Naive thymus-derived CD4-positive, alpha-beta T cell (primary cell): ENCODE measurements at regions of chr10 and their contacts with region 1.

Region 1: GRCh38 chr10:119542988-119543813 is 682 bp upstream of the RGS10 start:
- DNase-seq: peak; percentile 54 to 74 (median 68)
- ATAC-seq: peak; percentile 68
- H3K4me3 ChIP-seq: peak overlapping the region; percentile 96
- H3K4me3 Mint-ChIP-seq: peak overlapping the region; percentile 83 to 97 (median 94)
- H3K27ac ChIP-seq: peak overlapping the region; percentile 89
- H3K27ac Mint-ChIP-seq: peak overlapping the region; percentile 86 to 95 (median 91)
- H3K4me1 ChIP-seq: peaks cover 15 to 19% of the 10 kb centered on the region in 2 donors
- H3K4me1 Mint-ChIP-seq: peaks cover 19 to 41% (median 28%) of the 10 kb centered on the region in 7 donors
- H3K27me3 ChIP-seq: no peaks in the 10 kb centered on the region
- H3K27me3 Mint-ChIP-seq: peaks cover 0 to 17% (median 3%) of the 10 kb centered on the region in 5 donors

Region 2: DNA sequence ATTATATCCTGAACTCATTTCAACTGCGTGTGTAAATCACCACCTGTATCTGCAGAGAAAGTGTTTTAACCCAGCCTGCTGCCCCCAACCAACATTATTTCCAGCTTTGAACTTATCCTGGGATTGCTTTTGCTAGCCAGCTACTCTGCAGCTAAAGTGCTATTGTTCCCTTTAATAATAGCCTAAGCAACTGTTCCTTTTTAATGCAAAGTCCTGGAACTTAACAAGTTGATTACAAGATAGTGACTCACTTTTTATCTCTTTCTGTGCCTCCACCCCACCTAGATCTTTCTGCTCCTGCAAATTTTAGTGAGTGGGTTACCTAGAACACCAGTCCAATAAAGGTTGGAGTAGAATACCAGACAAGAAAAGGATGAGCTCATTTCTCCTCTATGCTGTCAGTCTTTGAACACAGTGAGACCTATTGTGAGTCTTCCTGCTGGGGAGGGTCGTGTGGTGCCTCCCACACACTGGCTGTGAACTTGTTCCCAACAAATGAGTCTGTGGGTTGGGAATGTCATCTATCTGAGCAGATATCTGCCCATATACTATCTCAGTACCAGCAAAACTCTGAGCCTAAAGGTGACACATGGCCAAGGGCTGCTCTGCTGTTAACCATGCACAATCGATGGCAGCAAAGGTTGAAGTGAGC is 1338.8 kb before region 1 on chr10:
- CTCF ChIA-PET with region 1: no interaction called
- POLR2A ChIA-PET with region 1: no interaction called
- intact Hi-C with region 1: no loop called
- DNase-seq: no peak
- ATAC-seq: no peak
- H3K4me3 ChIP-seq: no peak overlapping the region
- H3K4me3 Mint-ChIP-seq: no peak overlapping the region
- H3K27ac ChIP-seq: no peak overlapping the region
- H3K27ac Mint-ChIP-seq: no peak overlapping the region
- H3K4me1 ChIP-seq: no peaks in the 10 kb centered on the region
- H3K4me1 Mint-ChIP-seq: no peaks in the 10 kb centered on the region
- H3K27me3 ChIP-seq: no peaks in the 10 kb centered on the region
- H3K27me3 Mint-ChIP-seq: peaks cover 9 to 51% (median 44%) of the 10 kb centered on the region in 5 donors

Region 3: DNA sequence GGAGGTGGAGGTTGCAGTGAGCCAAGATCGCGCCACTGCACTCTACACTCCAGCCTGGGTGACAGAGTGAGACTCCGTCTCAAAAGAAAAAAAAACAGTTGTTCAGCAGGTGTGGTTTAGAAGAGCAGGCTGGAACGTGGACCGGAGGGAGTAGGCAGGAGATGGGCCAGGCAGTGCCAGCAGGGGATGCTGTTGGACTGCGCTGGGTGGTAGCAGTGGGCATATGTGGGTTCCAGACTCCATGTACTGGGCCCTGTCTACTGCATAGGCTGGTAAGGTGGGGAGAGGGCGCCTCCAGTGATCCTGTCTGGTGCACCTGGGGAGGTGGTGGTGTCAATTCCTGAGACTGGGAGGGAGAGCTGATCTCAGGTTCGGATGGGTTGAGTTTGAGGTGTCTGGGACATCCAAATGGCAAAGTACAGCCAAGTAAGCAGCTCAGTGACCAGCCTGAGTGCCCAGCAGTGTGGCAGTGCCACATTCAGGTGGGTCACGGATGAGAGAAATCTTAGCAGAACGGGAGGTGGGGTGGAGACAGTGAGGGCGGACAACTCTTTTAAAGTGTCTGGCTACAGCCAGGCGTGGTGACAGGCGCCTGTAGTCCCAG is 403.6 kb before region 1 on chr10:
- CTCF ChIA-PET with region 1: no interaction called
- POLR2A ChIA-PET with region 1: no interaction called
- intact Hi-C with region 1: loop called (anchors 1 to 5 kb)
- DNase-seq: peak; percentile 18 to 58 (median 42)
- ATAC-seq: peak; percentile 85
- H3K4me3 ChIP-seq: no peak overlapping the region
- H3K4me3 Mint-ChIP-seq: no peak overlapping the region
- H3K27ac ChIP-seq: no peak overlapping the region
- H3K27ac Mint-ChIP-seq: peak overlapping the region; percentile 49 to 92 (median 62)
- H3K4me1 ChIP-seq: no peaks in the 10 kb centered on the region
- H3K4me1 Mint-ChIP-seq: peaks cover 5 to 26% (median 11%) of the 10 kb centered on the region in 7 donors
- H3K27me3 ChIP-seq: no peaks in the 10 kb centered on the region
- H3K27me3 Mint-ChIP-seq: no peaks in the 10 kb centered on the region

Region 4: GRCh38 chr10:119207367-119207668 is 335.9 kb before region 1 on chr10 and contains the start of gene GRK5:
- CTCF ChIA-PET with region 1: interaction called, 12 read pairs
- POLR2A ChIA-PET with region 1: interaction called, 25 read pairs
- intact Hi-C with region 1: loop called (anchors 1 kb)
- DNase-seq: peak; percentile 96 to 99 (median 98)
- ATAC-seq: peak; percentile 91
- H3K4me3 ChIP-seq: peak within 1 kb of the TSS; percentile 75
- H3K4me3 Mint-ChIP-seq: peak within 1 kb of the TSS; percentile 94 to 98 (median 97)
- H3K27ac ChIP-seq: peak within 1 kb of the TSS; percentile 89
- H3K27ac Mint-ChIP-seq: peak within 1 kb of the TSS; percentile 91 to 99 (median 96)
- H3K4me1 ChIP-seq: peaks cover 23 to 35% of the 10 kb centered on the region in 2 donors
- H3K4me1 Mint-ChIP-seq: peaks cover 41 to 48% (median 44%) of the 10 kb centered on the region in 7 donors
- H3K27me3 ChIP-seq: no peaks in the 10 kb centered on the region
- H3K27me3 Mint-ChIP-seq: no peaks in the 10 kb centered on the region
- total RNA-seq, gene GRK5: 20.3 to 45.2 (median 34.2) TPM

Region 5: DNA sequence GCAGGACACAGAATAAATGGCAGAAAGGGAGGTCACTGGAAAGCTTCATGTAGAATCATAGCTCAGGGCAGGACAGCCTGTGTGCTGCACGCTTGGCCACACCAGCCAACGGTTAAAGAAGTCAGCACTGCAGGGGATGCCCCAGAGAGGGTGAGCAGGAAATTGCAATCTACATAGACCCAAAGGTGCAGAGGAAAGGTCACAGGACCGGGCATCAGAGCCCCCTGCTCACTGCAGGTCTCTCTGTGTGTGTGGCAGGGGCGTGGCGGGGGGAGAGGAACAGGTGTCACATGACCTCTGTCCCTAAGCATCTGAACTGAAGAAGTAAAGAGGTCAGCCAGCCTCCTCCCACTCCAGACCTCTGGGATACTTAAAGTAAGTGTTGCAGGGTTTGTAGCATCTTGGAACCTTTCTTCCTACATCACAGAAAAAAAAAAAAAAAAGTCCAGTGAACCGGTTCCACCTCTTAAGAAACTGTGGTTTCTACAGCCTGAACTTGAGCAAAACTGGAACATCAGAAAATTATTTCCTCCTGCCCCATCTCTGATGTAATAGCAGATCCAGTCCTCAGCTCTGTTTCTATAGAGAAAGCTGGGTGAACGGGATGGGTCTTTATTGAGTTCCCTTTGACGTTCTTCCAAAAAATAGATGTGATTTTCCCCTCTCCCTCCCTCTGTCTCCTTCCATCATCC is 64.9 kb before region 1 on chr10:
- CTCF ChIA-PET with region 1: interaction called, 10 read pairs
- POLR2A ChIA-PET with region 1: interaction called, 7 read pairs
- intact Hi-C with region 1: loop called in 1 of 2 experiments (anchors 2 kb)
- DNase-seq: peak in 2 of 9 donors; percentile 5 to 35
- ATAC-seq: peak; percentile 64
- H3K4me3 ChIP-seq: no peak overlapping the region
- H3K4me3 Mint-ChIP-seq: peak overlapping the region; percentile 66 to 81 (median 71)
- H3K27ac ChIP-seq: no peak overlapping the region
- H3K27ac Mint-ChIP-seq: peak overlapping the region; percentile 23 to 81 (median 71)
- H3K4me1 ChIP-seq: peaks cover 20 to 26% of the 10 kb centered on the region in 2 donors
- H3K4me1 Mint-ChIP-seq: peaks cover 25 to 44% (median 35%) of the 10 kb centered on the region in 7 donors
- H3K27me3 ChIP-seq: no peaks in the 10 kb centered on the region
- H3K27me3 Mint-ChIP-seq: peaks cover 0 to 6% (median 0%) of the 10 kb centered on the region in 5 donors

Region 6: DNA sequence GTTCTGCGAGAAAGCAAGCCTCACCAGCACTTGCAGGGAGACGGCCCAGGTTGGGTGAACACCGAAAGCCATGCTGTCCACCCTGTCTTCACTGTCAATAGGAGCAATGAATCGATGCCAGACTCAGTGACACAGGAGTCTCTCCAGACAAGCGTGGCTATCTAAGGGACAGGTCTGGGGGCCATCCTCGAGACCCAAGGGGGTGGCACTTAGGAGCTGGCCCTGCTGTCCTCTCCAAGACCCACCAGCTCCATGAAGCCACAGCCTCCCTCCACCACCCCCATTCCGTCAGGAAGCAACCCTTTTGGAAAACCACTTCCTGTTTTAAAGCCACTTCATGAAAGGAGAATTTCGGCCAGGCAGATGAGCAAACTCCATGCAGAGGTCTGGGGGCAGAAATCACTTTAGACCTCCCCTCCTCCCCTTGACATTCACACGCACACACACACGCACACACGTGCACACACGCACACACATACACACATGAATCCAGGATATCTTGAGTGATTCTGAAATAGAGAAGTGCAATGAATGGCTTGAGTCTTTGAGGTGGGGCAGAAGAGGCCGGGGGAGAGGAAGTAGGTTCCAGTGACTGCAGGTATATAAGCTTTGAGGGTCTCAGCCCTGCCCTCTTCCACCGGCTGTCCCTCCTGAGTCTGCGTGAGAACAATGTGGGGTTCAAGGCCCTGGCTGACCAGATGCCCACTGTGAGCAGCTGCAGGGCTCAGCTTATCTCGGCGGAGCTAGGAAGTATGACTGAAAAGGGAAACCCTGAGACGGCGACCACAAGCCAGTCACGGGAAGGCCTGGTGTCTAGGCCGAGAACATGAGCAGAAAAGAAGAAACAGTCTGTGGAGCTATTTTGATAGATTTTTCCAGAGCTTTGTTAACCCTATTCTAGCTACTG is 25.7 kb before region 1 on chr10:
- CTCF ChIA-PET with region 1: interaction called, 13 read pairs
- POLR2A ChIA-PET with region 1: interaction called, 160 read pairs
- intact Hi-C with region 1: loop called (anchors 1 kb)
- DNase-seq: peak in 6 of 9 donors; percentile 28 to 59 (median 44)
- ATAC-seq: peak; percentile 60
- H3K4me3 ChIP-seq: peak overlapping the region; percentile 42
- H3K4me3 Mint-ChIP-seq: peak overlapping the region; percentile 65 to 88 (median 78)
- H3K27ac ChIP-seq: peak overlapping the region; percentile 81
- H3K27ac Mint-ChIP-seq: peak overlapping the region; percentile 89 to 98 (median 95)
- H3K4me1 ChIP-seq: peaks cover 33 to 68% of the 10 kb centered on the region in 2 donors
- H3K4me1 Mint-ChIP-seq: peaks cover 45 to 86% (median 76%) of the 10 kb centered on the region in 7 donors
- H3K27me3 ChIP-seq: no peaks in the 10 kb centered on the region
- H3K27me3 Mint-ChIP-seq: no peaks in the 10 kb centered on the region

Region 7: GRCh38 chr10:119650692-119651513 is 107.7 kb after region 1 on chr10 and contains the start of gene BAG3:
- CTCF ChIA-PET with region 1: interaction called, 3 read pairs
- POLR2A ChIA-PET with region 1: interaction called, 5 read pairs
- intact Hi-C with region 1: loop called (anchors 1 kb)
- DNase-seq: peak; percentile 50 to 84 (median 67)
- ATAC-seq: peak; percentile 88
- H3K4me3 ChIP-seq: peak within 1 kb of the TSS; percentile 83
- H3K4me3 Mint-ChIP-seq: peak within 1 kb of the TSS; percentile 93 to 100 (median 97)
- H3K27ac ChIP-seq: peak within 1 kb of the TSS; percentile 93
- H3K27ac Mint-ChIP-seq: peak within 1 kb of the TSS; percentile 91 to 99 (median 97)
- H3K4me1 ChIP-seq: peaks cover 20 to 29% of the 10 kb centered on the region in 2 donors
- H3K4me1 Mint-ChIP-seq: peaks cover 29 to 48% (median 44%) of the 10 kb centered on the region in 7 donors
- H3K27me3 ChIP-seq: no peaks in the 10 kb centered on the region
- H3K27me3 Mint-ChIP-seq: peaks cover 0 to 2% (median 0%) of the 10 kb centered on the region in 5 donors
- total RNA-seq, gene BAG3: 21.9 to 44.5 (median 23.1) TPM